ENCODE measurements at regions of chr15 and their contacts with region 1.

Region 1: DNA sequence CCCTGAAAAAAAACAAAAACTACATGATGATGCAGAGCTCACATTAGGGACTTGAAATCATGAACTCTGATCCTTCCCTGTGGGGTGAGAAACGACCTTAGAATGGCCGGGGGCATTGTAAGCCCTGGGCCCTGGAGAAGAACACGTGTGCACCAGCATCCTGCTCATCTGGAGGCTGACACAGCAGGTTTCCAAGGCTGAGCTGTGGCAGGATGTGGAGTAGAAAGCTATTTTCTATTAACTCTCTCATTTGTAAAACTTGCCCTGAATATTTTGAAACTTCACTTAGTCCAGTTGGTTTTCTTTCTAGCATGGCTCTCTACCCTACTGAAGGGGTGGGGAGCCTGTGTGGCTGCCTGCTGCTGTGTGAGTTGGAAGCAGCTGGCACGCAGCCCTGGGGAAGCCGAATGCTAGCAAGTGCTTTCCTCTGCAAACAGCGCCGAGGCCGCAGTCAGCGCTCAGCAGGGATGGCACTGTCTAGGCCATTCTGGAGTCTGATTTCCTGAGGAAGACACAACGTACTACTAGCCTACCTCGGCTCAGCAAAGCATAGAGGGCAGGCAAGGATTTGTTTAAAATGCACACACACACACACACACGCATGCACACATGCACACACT is 58.0 kb downstream of the GABRG3 start:
- DNase-seq: no peak
- H3K4me3 ChIP-seq: no peak overlapping the region
- H3K27ac ChIP-seq: no peak overlapping the region
- H3K27me3 ChIP-seq: no peaks in the 10 kb centered on the region
- CTCF ChIP-seq: no peak

Region 2: GRCh38 chr15:26928051-26928450 is 100.9 kb before region 1 on chr15:
- in situ Hi-C with region 1: loop called (anchors 25 kb)
- DNase-seq: no peak
- H3K4me3 ChIP-seq: no peak overlapping the region
- H3K27ac ChIP-seq: no peak overlapping the region
- H3K27me3 ChIP-seq: no peaks in the 10 kb centered on the region
- CTCF ChIP-seq: no peak

Measured in brain microvascular endothelial cell (primary cell).